ENCODE measurements at regions of chr16 and their contacts with region 1.

Region 1: GRCh38 chr16:31215287-31216162 is 1.4 kb downstream of the PYDC1 start:
- DNase-seq: peak; percentile 55
- H3K4me3 ChIP-seq: peak overlapping the region; percentile 41
- H3K27ac ChIP-seq: no peak overlapping the region
- H3K4me1 ChIP-seq: peaks cover 15% of the 10 kb centered on the region
- H3K27me3 ChIP-seq: peaks cover 48% of the 10 kb centered on the region
- CTCF ChIP-seq: no peak

Region 2: DNA sequence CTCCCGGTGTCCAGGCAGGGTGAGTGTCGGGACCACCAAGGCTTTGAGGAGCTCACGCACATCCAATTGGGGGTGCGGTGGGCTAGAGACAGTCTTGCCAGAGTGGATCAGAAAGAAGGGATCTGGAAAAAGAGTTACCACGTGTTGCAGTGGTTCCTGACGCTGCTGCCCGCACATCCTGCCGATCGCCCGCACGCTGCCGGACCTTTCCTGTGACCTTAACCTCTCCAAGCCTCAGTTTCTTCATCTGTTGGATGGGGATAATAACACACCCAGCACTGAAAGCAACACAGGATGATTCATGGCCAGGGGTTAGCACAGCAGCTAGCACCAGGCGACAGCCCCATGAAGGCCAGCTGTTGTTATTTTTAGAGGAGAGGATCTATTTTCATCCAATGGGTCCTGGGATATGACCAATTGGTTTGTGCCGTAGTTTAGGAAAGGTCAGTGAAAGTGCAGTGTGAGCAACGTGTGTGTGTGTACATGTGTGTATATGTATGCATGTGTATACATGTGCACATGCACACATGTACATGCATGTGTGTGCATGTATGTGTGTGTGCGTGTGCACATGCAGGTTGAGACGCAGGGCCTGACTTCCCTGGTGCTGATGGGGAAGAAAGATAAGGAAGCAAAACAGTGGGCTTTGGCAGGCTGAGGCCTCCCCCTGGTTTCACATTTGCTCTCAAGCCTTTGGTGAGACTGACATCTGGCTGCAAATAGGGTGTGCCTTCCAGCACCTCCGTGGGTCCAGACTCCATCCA is 142.0 kb after region 1 on chr16:
- CTCF ChIA-PET with region 1: no interaction called
- POLR2A ChIA-PET with region 1: interaction called, 10 read pairs
- intact Hi-C with region 1: no loop called
- DNase-seq: no peak
- H3K4me3 ChIP-seq: no peak overlapping the region
- H3K27ac ChIP-seq: no peak overlapping the region
- H3K4me1 ChIP-seq: no peaks in the 10 kb centered on the region
- H3K27me3 ChIP-seq: no peaks in the 10 kb centered on the region
- CTCF ChIP-seq: no peak